PC-9 (cell line): ENCODE measurements at regions of chr5 and their contacts with region 1.

Region 1: DNA sequence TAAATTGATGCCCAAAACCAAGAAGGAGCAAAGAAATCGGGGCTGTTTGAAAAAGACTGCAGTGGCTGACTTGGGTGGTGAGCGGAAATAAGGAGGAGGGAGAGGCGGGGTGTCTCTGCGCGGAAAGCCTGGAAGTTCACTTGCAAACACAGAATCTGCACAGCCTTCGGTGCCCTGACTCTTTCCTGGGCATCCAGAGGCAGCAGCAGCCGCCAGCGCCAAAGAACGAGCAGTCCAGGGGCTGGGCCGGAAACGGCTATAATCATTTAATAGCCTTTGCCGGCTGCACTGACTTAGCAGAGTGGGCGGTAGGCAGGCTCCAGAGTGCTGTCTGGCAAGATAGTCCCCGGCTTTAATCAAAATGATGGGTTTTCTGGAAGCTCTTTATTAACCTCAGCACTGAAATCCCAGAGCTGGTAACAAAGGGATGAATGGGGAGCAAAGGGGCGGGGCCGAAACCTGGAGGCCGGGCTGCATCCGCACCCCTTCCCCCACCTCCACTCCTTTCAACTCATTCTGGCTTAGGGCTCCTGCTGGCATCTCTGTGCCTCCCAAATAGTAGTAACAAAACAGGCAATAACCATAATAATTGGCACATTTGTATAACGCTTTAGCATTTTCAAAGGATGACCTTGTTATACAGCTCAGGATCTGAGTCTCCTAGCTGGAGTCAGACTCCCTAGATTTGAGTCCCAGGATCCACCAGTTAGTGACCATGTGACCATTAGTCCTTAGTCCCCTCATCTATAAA is 35.8 kb downstream of the PCDHAC2 start:
- DNase-seq: peak in 1 of 2 experiments; percentile 37
- H3K4me3 ChIP-seq: peak overlapping the region; percentile 41; the same call in 1 of the 2 replicates
- H3K27ac ChIP-seq: peak overlapping the region; percentile 43; the same call in 1 of the 2 replicates
- H3K4me1 ChIP-seq: peaks cover 16% of the 10 kb centered on the region; the same call in 1 of the 2 replicates
- H3K27me3 ChIP-seq: no peaks in the 10 kb centered on the region
- CTCF ChIP-seq: no peak

Region 2: DNA sequence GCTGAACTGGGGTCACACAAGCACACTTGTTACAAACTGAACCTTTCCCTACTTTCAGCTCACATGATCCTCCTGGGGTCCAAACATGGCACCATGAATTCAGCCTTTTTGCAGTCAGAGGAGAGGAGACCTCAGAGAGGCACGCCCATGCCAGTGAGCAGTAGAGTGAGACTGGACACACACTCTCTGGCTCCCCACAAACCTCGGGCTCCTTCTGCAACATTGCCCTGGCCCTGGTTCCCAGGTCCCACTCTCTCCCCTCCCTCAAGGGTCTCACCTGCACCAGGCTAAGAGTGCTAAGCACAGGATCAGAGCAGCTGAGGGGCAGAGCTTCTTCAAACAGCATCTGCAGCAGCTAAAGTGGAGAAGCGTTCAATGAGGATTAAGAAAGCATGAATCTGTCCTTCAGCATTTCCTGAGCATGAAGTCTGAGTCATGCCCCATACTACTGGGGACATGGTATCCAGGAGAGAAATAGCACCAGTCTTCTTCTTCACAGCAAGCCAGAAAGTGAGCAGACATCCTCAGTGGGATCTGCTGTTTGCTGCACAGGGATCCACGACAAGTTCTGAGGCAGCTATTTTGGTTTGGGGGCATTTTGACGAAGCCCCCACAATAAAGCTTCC is 410.2 kb before region 1 on chr5:
- CTCF ChIA-PET with region 1: no interaction called
- POLR2A ChIA-PET with region 1: interaction called, 11 read pairs
- intact Hi-C with region 1: no loop called
- DNase-seq: no peak
- H3K4me3 ChIP-seq: no peak overlapping the region
- H3K27ac ChIP-seq: no peak overlapping the region
- H3K4me1 ChIP-seq: no peaks in the 10 kb centered on the region
- H3K27me3 ChIP-seq: no peaks in the 10 kb centered on the region
- CTCF ChIP-seq: no peak

Region 3: DNA sequence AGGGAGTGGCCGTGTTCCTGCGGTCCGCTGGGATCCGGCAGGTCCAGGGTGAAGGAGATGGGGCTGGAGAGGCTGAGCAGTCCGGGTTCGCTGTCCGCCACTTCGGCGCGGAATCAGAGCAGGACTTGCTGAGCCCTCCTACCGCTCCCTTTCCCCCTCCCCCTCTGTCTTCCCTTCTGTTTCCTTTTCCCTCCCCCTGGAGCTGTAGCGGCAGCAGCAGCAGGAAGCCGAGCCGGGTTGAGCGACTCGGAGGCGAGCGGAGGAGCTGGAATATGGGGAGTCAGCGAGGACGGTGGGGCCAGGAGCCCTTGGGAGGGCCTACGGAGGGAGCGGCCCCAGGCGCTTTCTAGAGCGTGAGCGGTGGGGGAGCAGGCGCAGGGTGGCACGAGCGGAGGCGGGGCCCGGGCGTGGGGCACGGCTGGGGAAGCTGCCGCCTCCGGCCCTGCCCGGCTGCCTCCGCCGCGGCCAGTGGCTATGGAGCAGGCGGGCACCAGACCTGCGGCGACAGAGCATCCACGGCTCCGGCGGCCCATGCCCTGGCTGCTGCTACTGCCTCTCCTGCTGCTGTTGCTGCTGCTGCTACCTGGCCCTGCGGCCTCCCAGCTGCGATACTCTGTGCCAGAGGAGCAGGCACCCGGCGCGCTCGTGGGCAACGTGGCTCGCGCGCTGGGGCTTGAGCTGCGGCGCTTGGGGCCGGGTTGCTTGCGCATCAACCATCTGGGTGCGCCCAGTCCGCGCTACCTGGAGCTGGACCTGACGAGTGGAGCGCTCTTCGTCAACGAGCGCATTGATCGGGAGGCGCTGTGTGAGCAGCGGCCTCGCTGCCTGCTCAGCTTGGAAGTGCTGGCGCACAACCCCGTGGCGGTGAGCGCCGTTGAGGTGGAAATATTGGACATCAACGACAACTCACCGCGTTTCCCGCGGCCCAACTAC is 35.5 kb before region 1 on chr5 and contains the start of gene PCDHAC2:
- CTCF ChIA-PET with region 1: no interaction called
- POLR2A ChIA-PET with region 1: no interaction called
- intact Hi-C with region 1: loop called (anchors 1 kb)
- DNase-seq: peak in 1 of 2 experiments; percentile 65
- H3K4me3 ChIP-seq: peak within 1 kb of the TSS; percentile 58
- H3K27ac ChIP-seq: no peak within 1 kb of the TSS
- H3K4me1 ChIP-seq: no peaks in the 10 kb centered on the region
- H3K27me3 ChIP-seq: no peaks in the 10 kb centered on the region
- CTCF ChIP-seq: no peak
- total RNA-seq, gene PCDHAC2: 2.8 and 3.4 TPM in 2 replicates

Region 4: DNA sequence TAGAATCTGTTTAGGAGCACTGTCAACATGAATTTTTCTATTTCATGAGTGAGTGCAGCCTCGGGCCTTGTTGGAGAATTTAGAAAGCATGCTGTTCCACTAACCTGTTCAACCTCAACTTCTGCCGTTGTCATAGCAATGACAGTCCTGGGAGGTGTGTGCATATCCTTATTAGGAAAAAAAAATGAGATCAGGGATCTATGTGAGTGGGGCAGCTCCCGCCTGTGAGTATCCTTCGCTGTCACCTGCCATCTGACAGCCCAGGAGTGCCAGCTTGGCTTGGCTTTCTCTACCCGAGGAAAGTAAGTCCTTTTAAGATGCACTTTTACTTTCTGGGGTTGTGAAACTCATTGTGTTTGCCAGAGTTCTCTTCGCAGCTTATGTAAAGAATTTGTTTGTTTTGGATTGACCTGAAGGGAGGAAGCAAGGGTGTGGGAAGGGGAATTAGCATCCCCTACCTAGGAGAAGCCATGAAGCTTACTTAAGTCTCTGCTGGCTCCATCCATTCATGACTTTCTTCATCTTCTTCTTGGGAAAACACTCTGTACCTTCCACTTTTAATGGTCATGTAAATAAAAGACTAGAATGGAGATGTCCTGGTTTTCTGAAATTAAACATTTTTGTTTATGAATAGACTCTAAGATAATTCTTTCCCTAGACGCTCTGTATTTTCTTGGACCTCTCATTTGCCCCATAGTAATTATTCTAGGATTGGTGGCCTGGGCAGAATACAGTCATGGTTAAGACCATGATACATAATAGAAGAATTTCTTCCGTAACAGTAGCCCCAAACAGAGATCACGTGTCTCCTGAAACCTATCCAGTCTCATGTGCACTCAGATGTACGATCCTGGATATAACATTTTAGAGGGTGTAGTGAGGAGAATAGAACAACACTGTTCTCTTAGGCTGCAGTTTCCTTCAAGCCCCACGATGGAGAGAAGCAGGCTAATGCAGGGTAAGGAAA is 13.7 kb before region 1 on chr5:
- CTCF ChIA-PET with region 1: no interaction called
- POLR2A ChIA-PET with region 1: interaction called, 13 read pairs
- intact Hi-C with region 1: loop called (anchors 1 kb)
- DNase-seq: peak; percentile 33 to 68
- H3K4me3 ChIP-seq: no peak overlapping the region
- H3K27ac ChIP-seq: peak overlapping the region; percentile 52
- H3K4me1 ChIP-seq: no peaks in the 10 kb centered on the region
- H3K27me3 ChIP-seq: no peaks in the 10 kb centered on the region
- CTCF ChIP-seq: no peak